HCT116 (cell line): ENCODE measurements at regions of chr6 and their contacts with region 1.

Region 1: DNA sequence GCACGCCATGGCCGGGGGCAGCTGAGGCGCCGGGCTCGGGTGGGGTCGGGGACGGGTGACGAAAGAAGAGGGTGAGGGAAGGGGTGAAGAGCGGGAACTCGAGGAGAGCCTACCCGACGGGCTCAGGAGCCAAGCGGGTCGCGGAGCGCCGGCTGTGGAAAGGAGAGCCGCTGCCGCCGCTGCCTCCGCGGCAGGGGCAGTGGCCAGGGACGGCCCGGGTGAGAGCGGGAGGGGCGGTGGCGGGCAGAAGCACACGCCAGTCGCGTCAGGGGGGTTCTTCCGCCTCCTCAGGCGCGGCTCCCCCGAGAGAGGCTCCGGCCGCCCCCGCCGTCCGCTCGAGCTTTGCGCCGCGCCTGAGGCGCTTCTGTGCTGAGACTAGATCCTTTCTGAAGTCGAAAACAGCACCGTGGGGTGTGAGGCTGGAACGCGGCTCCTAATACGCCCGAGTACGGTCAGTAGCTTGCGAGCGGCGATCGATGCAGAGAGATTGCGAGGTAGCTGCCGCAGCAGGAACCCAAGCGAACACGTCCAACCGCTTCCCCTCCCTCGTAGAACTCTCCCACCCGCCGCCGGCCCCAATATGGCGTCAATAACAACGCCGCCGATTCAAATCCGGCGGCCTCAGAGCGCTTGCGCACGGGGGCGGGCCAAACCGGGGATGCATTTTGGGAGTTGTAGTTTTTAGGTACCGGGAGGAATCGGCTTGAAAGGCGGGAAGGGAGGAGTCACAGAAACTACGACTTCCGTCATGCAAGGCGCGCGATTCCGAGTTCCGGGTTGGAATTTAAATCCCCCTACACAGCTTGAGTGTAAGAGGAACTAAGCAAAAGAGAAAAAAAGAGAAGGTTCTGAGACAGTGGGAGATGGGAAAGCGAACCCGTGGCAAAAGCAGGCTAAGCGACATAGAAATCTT is at the start of gene AKIRIN2:
- DNase-seq: peak; percentile 98
- ATAC-seq: peak; percentile 89
- H3K4me3 ChIP-seq: peak within 1 kb of the TSS; percentile 78 to 91
- H3K27ac ChIP-seq: peak within 1 kb of the TSS; percentile 95
- H3K4me1 ChIP-seq: peaks cover 12 to 42% of the 10 kb centered on the region in 2 experiments
- H3K27me3 ChIP-seq: no peaks in the 10 kb centered on the region
- CTCF ChIP-seq: no peak
- POLR2A ChIP-seq: peak; percentile 84
- RAD21 ChIP-seq: no peak
- total RNA-seq, gene AKIRIN2: 54.8 TPM

Region 2: GRCh38 chr6:87407901-87408720 is 293.8 kb before region 1 on chr6 and contains the start of gene CFAP206:
- CTCF ChIA-PET with region 1: no interaction called
- POLR2A ChIA-PET with region 1: no interaction called
- RAD21 ChIA-PET with region 1: no interaction called
- intact Hi-C with region 1: loop called (anchors 5 kb)
- DNase-seq: peak; percentile 73
- ATAC-seq: peak; percentile 87
- H3K4me3 ChIP-seq: peak within 1 kb of the TSS; percentile 67 to 79
- H3K27ac ChIP-seq: peak within 1 kb of the TSS; percentile 85
- H3K4me1 ChIP-seq: peaks cover 4 to 12% of the 10 kb centered on the region in 2 experiments; a peak in 3 of 4 replicates
- H3K27me3 ChIP-seq: no peaks in the 10 kb centered on the region
- CTCF ChIP-seq: no peak
- POLR2A ChIP-seq: no peak
- RAD21 ChIP-seq: no peak; the same call in 1 of the 2 replicates
- total RNA-seq, gene CFAP206: 0.54 TPM

Region 3: GRCh38 chr6:87714093-87714809 is 12.3 kb after region 1 on chr6:
- CTCF ChIA-PET with region 1: no interaction called
- POLR2A ChIA-PET with region 1: interaction called, 5 read pairs
- RAD21 ChIA-PET with region 1: no interaction called
- intact Hi-C with region 1: loop called (anchors 1 kb)
- DNase-seq: no peak
- ATAC-seq: peak; percentile 65
- H3K4me3 ChIP-seq: no peak overlapping the region
- H3K27ac ChIP-seq: no peak overlapping the region
- H3K4me1 ChIP-seq: peaks cover 2 to 8% of the 10 kb centered on the region in 2 experiments; a peak in 2 of 4 replicates
- H3K27me3 ChIP-seq: no peaks in the 10 kb centered on the region
- CTCF ChIP-seq: no peak
- POLR2A ChIP-seq: no peak
- RAD21 ChIP-seq: no peak